Sciatic nerve (tissue), 2 donors: ENCODE measurements at regions of chr2 and their contacts with region 1.

Region 1: DNA sequence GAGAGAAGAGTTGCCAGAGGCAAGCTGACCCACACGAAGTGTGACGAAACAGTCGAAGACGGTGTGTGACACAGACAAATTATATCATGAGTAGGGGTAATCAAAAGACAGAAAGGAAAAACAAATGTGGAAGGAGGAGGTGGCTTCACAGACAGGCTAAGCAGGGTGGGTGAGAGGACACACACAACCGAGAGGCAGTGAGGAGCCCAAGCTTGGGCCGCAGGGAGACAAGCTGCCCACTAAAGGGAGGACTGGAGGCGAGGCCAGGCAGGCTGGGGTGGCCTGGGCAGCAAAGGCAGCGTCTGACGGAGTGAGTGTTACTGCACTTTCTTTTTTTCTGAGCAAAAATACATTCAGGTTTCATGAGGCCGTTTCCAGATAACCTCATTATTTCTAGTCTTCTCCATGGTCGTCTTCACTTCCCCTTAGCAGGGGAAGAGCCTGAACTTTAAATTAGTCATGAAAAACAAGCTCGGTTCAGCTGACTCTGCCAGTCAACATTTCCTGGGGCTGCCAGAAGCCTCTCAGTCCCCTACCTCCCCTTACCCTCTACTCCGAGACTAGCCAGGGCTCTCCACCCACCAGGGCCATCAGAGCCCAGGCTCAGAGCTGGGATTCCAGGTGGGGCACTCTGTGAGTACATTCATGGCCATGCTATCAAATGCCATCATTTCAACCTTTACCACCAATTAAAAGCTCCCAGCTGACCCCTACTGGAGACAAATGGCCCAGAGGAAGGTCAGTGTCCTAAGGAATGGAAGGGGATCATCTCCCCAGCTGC is 13.8 kb upstream of the ZFP36L2 start:
- DNase-seq: no peak
- ATAC-seq: peak; percentile 11

Region 2: GRCh38 chr2:42835577-42836371 is 404.4 kb before region 1 on chr2:
- intact Hi-C with region 1: loop called (anchors 10 kb)
- DNase-seq: no peak
- ATAC-seq: peak; percentile 93

Region 3: GRCh38 chr2:43305012-43305411 is 64.8 kb after region 1 on chr2:
- intact Hi-C with region 1: no loop called
- DNase-seq: no peak
- ATAC-seq: peak; percentile 83

Region 4: DNA sequence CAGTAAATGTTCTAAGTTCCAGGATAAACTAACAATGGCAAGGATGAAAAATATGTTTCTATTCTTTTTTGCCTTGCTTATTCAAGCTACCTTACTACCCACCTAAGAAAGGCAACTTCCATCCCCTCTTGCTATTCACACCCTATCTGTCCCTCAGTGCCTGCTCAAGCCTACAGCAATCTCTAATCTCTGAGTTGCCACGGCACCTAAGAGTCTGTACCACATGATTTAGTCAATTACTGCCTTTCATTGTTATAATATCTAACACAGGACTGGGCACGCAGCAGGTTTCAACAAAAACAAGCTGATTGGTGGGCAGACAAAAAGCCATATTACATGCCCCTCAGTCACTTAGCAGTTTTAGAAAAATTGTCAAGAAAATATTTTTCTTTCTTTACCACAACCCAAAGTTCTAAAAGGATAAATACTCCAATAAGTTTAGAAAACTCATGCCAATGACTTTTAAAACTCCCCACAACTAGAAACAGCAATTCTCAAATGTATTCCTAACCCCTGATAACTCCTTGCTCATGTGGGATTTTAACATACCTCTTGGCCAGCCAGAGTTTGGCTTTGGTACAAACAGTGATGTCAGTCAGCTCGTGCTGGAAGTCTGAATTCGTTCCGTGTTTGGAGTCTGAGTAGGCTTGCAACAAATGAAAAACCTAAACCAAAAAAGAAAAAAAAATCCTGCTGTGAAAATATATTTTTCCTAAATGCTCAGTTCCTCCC is 103.6 kb after region 1 on chr2:
- intact Hi-C with region 1: no loop called
- DNase-seq: peak; percentile 86
- ATAC-seq: peak; percentile 78